ENCODE measurements at regions of chr6 and their contacts with region 1.

Region 1: GRCh38 chr6:105726907-105727655 is 324.2 kb upstream of the PREP start:
- DNase-seq: no peak

Region 2: DNA sequence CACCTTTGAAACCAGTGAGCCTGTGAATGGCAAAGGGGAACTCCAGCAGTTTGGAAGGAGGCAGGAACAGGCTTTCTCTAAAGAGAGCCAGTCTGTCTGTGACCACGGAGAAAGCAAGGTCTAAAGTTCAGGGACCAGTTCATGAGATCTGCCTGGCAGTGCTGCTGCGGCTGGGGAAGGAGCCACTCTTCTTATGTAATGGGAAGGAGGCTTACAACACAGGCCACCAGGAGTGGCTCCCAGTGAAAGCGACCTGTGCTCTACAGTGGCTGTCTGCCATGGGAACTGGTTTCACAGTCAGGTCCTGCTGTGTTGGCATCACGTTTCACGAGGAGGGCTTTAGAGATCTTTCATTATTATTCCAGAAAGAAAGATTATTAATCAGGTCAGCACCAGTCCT is 67.2 kb after region 1 on chr6:
- intact Hi-C with region 1: loop called in 1 of 2 experiments (anchors 2 kb)
- DNase-seq: peak; percentile 83

Measured in posterior vena cava (tissue), 2 donors.